Activated CD4-positive, alpha-beta memory T cell treated with anti-CD3 and anti-CD28 coated beads for 36 hours (primary cell): ENCODE measurements at regions of chr4 and their contacts with region 1.

Region 1: GRCh38 chr4:15001869-15002658 is at the start of gene CPEB2:
- DNase-seq: peak; percentile 93
- H3K4me3 Mint-ChIP-seq: peak within 1 kb of the TSS; percentile 87
- H3K27ac Mint-ChIP-seq: peak within 1 kb of the TSS; percentile 94
- H3K4me1 Mint-ChIP-seq: peaks cover 16% of the 10 kb centered on the region
- H3K27me3 Mint-ChIP-seq: no peaks in the 10 kb centered on the region
- total RNA-seq, gene CPEB2: 9.5 to 9.8 TPM

Region 2: GRCh38 chr4:13548984-13549546 is 1453.0 kb before region 1 on chr4:
- CTCF ChIA-PET with region 1: no interaction called
- POLR2A ChIA-PET with region 1: no interaction called
- intact Hi-C with region 1: loop called (anchors 5 kb)
- DNase-seq: peak; percentile 92
- H3K4me3 Mint-ChIP-seq: peak overlapping the region; percentile 64
- H3K27ac Mint-ChIP-seq: no peak overlapping the region
- H3K4me1 Mint-ChIP-seq: peaks cover 30% of the 10 kb centered on the region
- H3K27me3 Mint-ChIP-seq: peaks cover 63% of the 10 kb centered on the region

Region 3: DNA sequence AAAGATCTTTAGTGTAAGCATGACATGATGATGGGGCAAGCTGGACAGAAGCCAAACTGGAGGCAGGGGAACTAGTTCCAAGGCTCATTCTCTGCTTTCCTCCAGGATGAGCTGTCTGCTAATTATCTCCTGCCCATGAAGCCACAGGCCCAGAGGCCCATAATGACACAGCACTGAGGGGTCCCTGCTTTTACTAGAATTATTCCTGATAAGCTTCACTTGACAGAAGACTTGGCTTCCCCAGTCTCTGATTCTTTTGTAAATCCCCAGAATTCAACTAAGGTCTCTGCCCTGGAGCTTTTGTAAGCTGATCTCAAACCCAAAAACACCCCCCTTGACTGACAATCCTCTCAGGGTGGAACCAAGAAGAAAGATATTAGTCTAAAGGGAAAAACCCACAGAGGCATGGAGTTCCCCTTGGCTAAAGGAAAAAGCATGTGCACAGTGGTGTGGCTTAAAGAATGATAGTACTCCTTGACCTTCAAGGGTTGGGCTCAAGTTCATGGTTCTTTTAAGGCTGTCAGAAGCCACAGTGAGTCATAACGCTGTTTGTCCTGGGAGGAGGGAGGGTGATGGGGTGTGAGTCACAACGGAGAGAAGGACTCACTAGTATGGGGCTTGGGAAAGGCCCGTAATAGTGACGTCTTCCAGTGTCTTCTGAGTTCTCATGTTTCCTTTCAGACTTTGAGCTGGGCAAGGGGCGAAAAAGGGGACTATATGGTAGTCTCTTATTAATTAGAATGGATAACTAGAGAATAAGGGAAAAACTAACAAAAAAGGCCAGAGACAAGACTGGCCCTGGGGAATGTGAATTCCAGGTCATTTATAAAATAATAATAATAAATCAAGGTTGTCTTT is 145.8 kb before region 1 on chr4:
- CTCF ChIA-PET with region 1: no interaction called
- POLR2A ChIA-PET with region 1: interaction called, 5 read pairs
- intact Hi-C with region 1: loop called (anchors 1 kb)
- DNase-seq: peak; percentile 89
- H3K4me3 Mint-ChIP-seq: no peak overlapping the region
- H3K27ac Mint-ChIP-seq: peak overlapping the region; percentile 79
- H3K4me1 Mint-ChIP-seq: peaks cover 27% of the 10 kb centered on the region
- H3K27me3 Mint-ChIP-seq: peaks cover 4% of the 10 kb centered on the region

Region 4: GRCh38 chr4:15043226-15043625 is 41.2 kb after region 1 on chr4:
- CTCF ChIA-PET with region 1: no interaction called
- POLR2A ChIA-PET with region 1: no interaction called
- intact Hi-C with region 1: no loop called
- DNase-seq: no peak
- H3K4me3 Mint-ChIP-seq: no peak overlapping the region
- H3K27ac Mint-ChIP-seq: no peak overlapping the region
- H3K4me1 Mint-ChIP-seq: peaks cover 3% of the 10 kb centered on the region
- H3K27me3 Mint-ChIP-seq: no peaks in the 10 kb centered on the region

Region 5: DNA sequence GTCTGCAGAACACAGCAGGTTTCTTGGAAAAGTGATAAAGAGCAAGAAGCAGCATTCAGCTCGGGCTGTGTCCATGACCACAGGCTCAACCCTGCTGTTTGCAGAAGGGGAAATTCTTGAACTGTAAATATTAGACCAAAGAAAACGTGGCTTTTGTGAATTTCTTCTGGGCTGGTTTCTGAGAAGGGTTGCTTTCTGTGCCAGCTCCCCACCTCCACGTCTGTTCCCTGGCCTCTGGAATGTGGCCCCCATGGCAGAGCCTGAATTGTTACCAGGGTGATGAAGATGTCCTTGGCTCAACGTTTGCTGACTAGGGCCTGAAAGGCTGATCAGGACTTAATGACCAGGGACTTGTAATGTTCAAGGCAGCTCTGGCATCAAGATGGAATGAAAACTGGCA is 116.2 kb after region 1 on chr4:
- CTCF ChIA-PET with region 1: no interaction called
- POLR2A ChIA-PET with region 1: no interaction called
- intact Hi-C with region 1: loop called (anchors 5 kb)
- DNase-seq: no peak
- H3K4me3 Mint-ChIP-seq: no peak overlapping the region
- H3K27ac Mint-ChIP-seq: no peak overlapping the region
- H3K4me1 Mint-ChIP-seq: peaks cover 10% of the 10 kb centered on the region
- H3K27me3 Mint-ChIP-seq: peaks cover 19% of the 10 kb centered on the region

Region 6: GRCh38 chr4:15396157-15396800 is 394.2 kb after region 1 on chr4:
- CTCF ChIA-PET with region 1: no interaction called
- POLR2A ChIA-PET with region 1: no interaction called
- intact Hi-C with region 1: loop called (anchors 10 kb)
- DNase-seq: peak; percentile 67
- H3K4me3 Mint-ChIP-seq: no peak overlapping the region
- H3K27ac Mint-ChIP-seq: no peak overlapping the region
- H3K4me1 Mint-ChIP-seq: peaks cover 17% of the 10 kb centered on the region
- H3K27me3 Mint-ChIP-seq: no peaks in the 10 kb centered on the region

Region 7: DNA sequence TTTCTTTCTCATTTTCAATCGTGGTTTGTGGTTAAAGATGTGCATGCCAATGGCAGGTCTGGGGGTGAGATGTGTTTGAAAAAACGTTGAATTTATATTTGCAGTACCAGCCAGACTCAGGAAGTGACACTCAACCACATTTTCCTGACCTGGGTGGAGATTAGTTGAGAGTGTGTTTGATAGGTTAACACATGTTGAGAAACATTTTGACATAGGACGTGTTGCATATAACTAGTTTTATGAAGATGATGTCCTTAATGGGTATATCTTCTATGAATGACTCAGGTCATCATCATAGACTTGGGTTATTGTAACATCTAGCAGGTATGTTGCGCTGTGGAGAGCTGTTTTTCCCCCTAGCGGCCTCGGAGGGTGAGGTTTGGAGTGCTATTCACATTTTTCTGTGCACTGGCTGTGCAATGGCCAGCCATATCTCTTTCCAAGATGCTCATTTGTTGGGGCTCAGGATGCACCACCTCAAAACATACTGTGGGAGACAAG is 754.3 kb after region 1 on chr4:
- CTCF ChIA-PET with region 1: no interaction called
- POLR2A ChIA-PET with region 1: no interaction called
- intact Hi-C with region 1: loop called (anchors 5 kb)
- DNase-seq: peak; percentile 88
- H3K4me3 Mint-ChIP-seq: peak overlapping the region; percentile 50
- H3K27ac Mint-ChIP-seq: peak overlapping the region; percentile 73
- H3K4me1 Mint-ChIP-seq: peaks cover 43% of the 10 kb centered on the region
- H3K27me3 Mint-ChIP-seq: no peaks in the 10 kb centered on the region

Region 8: GRCh38 chr4:16217300-16218051 is 1215.4 kb after region 1 on chr4:
- CTCF ChIA-PET with region 1: no interaction called
- POLR2A ChIA-PET with region 1: no interaction called
- intact Hi-C with region 1: no loop called
- DNase-seq: no peak
- H3K4me3 Mint-ChIP-seq: peak overlapping the region; percentile 13
- H3K27ac Mint-ChIP-seq: peak overlapping the region; percentile 47
- H3K4me1 Mint-ChIP-seq: peaks cover 69% of the 10 kb centered on the region
- H3K27me3 Mint-ChIP-seq: no peaks in the 10 kb centered on the region